Activated CD4-positive, alpha-beta T cell treated with anti-CD3 and anti-CD28 coated beads for 36 hours (primary cell): ENCODE measurements at regions of chr14 and their contacts with region 1.

Region 1: DNA sequence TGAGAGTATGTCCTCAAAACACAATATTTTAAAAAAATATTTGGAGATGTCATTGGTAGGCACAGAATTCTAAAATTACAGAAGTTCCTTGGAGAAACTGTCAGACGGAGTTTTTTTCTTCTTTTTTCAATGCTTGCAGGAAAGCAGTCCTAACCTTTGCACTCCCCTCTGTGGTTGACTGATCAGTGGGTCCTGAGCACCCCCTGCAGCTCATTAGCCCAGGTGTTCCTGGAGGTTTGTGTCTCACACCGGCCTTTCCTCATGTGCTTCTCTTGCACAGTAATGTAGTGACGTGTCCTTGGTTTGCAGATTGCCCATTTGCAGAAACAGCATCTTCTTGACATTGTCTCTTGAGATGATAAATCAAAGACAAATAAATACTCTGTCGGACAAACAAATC is 513.0 kb downstream of the TMEM121 start:
- DNase-seq: peak; percentile 82
- ATAC-seq: peak; percentile 96
- H3K4me3 Mint-ChIP-seq: no peak overlapping the region
- H3K27ac Mint-ChIP-seq: no peak overlapping the region
- H3K4me1 Mint-ChIP-seq: peaks cover 13% of the 10 kb centered on the region
- H3K27me3 Mint-ChIP-seq: peaks cover 2% of the 10 kb centered on the region

Region 2: DNA sequence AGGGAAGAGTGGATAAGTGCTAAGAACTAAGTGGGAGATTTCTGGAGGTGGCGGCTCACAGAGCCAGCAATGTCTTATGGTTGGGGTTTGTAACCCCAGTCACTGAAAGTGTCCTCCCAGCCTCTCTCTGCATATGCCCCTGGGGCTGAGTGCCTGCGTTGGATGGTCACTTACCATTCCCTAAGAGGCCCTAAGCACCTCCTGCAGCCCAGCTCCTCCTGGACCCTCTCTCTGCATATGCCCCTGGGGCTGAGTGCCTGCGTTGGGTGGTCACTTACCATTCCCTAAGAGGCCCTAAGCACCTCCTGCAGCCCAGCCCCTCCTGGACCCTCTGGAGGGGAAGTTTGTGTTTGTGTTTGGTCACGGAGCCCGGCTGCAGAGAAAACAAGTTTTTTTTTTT is 87.2 kb before region 1 on chr14:
- CTCF ChIA-PET with region 1: no interaction called
- POLR2A ChIA-PET with region 1: no interaction called
- intact Hi-C with region 1: no loop called
- DNase-seq: no peak
- ATAC-seq: no peak
- H3K4me3 Mint-ChIP-seq: no peak overlapping the region
- H3K27ac Mint-ChIP-seq: no peak overlapping the region
- H3K4me1 Mint-ChIP-seq: peaks cover 6% of the 10 kb centered on the region
- H3K27me3 Mint-ChIP-seq: peaks cover 5% of the 10 kb centered on the region

Region 3: GRCh38 chr14:105974902-105975301 is 64.5 kb before region 1 on chr14:
- CTCF ChIA-PET with region 1: interaction called, 16 read pairs
- POLR2A ChIA-PET with region 1: no interaction called
- intact Hi-C with region 1: loop called in 1 of 2 experiments (anchors 2 kb)
- DNase-seq: peak; percentile 81
- ATAC-seq: peak; percentile 96
- H3K4me3 Mint-ChIP-seq: no peak overlapping the region
- H3K27ac Mint-ChIP-seq: no peak overlapping the region
- H3K4me1 Mint-ChIP-seq: peaks cover 3% of the 10 kb centered on the region
- H3K27me3 Mint-ChIP-seq: no peaks in the 10 kb centered on the region